ENCODE measurements at regions of chr10 and their contacts with region 1.

Region 1: DNA sequence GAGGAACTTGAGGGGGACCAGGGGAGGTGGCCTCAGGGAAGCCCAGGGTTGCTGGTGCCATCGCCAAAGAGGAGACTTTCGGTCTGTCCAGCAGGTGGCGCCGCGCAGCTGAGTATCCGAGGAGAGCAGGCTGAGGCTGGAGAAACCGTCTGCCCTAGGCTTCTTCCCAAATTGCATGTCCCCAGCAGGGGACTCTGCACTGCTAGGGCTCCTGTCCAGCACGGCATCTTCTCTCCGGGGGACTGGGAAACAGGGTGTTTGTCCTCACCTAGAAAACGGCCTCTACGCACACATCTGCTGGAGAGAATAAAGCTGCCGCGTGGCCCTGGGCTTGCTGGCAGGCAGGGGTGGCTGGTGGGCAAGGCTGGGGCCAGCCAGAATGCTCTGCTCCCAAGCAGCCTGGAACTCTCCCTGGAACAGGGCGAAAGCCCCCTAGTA is 161.9 kb downstream of the SH2D4B start:
- DNase-seq: peak; percentile 85
- ATAC-seq: peak; percentile 86
- H3K4me3 Mint-ChIP-seq: no peak overlapping the region
- H3K27ac Mint-ChIP-seq: no peak overlapping the region
- H3K4me1 Mint-ChIP-seq: no peaks in the 10 kb centered on the region
- H3K27me3 Mint-ChIP-seq: peaks cover 4% of the 10 kb centered on the region
- CTCF ChIP-seq: peak; percentile 85

Region 2: GRCh38 chr10:80684259-80684658 is 15.4 kb before region 1 on chr10:
- CTCF ChIA-PET with region 1: interaction called, 16 read pairs
- POLR2A ChIA-PET with region 1: interaction called, 4 read pairs
- intact Hi-C with region 1: no loop called
- DNase-seq: no peak
- ATAC-seq: peak; percentile 34
- H3K4me3 Mint-ChIP-seq: no peak overlapping the region
- H3K27ac Mint-ChIP-seq: no peak overlapping the region
- H3K4me1 Mint-ChIP-seq: no peaks in the 10 kb centered on the region
- H3K27me3 Mint-ChIP-seq: no peaks in the 10 kb centered on the region
- CTCF ChIP-seq: no peak

Region 3: GRCh38 chr10:80713398-80713928 is 13.8 kb after region 1 on chr10:
- CTCF ChIA-PET with region 1: interaction called, 20 read pairs
- POLR2A ChIA-PET with region 1: no interaction called
- intact Hi-C with region 1: no loop called
- DNase-seq: no peak
- ATAC-seq: no peak
- H3K4me3 Mint-ChIP-seq: no peak overlapping the region
- H3K27ac Mint-ChIP-seq: no peak overlapping the region
- H3K4me1 Mint-ChIP-seq: no peaks in the 10 kb centered on the region
- H3K27me3 Mint-ChIP-seq: peaks cover 2% of the 10 kb centered on the region
- CTCF ChIP-seq: no peak

Region 4: GRCh38 chr10:80753612-80754011 is 54.0 kb after region 1 on chr10:
- CTCF ChIA-PET with region 1: no interaction called
- POLR2A ChIA-PET with region 1: no interaction called
- intact Hi-C with region 1: no loop called
- DNase-seq: no peak
- ATAC-seq: no peak
- H3K4me3 Mint-ChIP-seq: no peak overlapping the region
- H3K27ac Mint-ChIP-seq: no peak overlapping the region
- H3K4me1 Mint-ChIP-seq: no peaks in the 10 kb centered on the region
- H3K27me3 Mint-ChIP-seq: peaks cover 13% of the 10 kb centered on the region
- CTCF ChIP-seq: no peak

Region 5: DNA sequence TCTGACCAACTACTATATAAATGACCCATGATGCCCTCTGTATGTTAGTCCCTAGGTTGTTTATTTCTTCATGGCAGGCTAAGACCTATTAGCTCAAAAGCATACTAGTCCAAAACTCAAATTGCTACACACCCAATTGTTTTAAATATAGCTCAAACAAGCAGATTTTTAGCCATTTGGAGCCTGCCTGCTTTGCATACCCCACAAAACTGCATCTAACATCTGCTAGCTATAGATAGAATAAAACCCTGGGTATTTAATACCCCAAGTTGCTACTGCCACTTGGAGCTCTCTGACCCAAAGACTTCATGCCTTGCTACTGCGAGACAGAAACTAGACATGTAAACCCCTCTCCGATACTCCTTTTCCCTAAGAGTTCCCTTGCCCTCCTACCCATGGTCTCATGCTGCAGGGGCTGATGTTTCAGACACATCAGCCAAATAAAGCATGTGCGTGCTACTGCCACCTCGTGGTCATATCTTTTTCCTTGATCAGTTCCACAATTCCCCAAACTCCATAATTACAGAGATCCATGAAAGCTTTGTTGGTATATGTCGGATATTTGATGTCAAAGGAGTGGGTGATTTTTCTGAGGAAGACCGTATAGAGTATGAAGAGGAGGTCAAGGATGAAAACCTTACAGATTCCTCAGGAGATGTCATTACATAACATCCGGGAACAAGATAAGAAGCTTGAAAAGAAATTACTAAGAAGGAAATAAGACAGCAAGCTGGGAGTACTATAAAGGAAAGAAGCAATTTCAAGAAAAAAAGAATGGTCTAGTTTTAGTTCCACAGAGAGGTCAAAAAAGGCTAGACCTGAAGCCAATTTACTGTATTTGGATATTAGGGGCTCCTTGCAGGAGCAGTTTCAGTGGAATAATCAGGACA is 224.7 kb after region 1 on chr10:
- CTCF ChIA-PET with region 1: interaction called, 17 read pairs
- POLR2A ChIA-PET with region 1: no interaction called
- intact Hi-C with region 1: loop called (anchors 2 kb)
- DNase-seq: peak; percentile 35
- ATAC-seq: no peak
- H3K4me3 Mint-ChIP-seq: no peak overlapping the region
- H3K27ac Mint-ChIP-seq: no peak overlapping the region
- H3K4me1 Mint-ChIP-seq: no peaks in the 10 kb centered on the region
- H3K27me3 Mint-ChIP-seq: peaks cover 2% of the 10 kb centered on the region
- CTCF ChIP-seq: peak; percentile 48

Region 6: GRCh38 chr10:81018708-81019365 is 319.2 kb after region 1 on chr10:
- CTCF ChIA-PET with region 1: interaction called, 9 read pairs
- POLR2A ChIA-PET with region 1: no interaction called
- intact Hi-C with region 1: loop called (anchors 5 kb)
- DNase-seq: peak; percentile 19
- ATAC-seq: peak; percentile 56
- H3K4me3 Mint-ChIP-seq: no peak overlapping the region
- H3K27ac Mint-ChIP-seq: no peak overlapping the region
- H3K4me1 Mint-ChIP-seq: peaks cover 2% of the 10 kb centered on the region
- H3K27me3 Mint-ChIP-seq: peaks cover 7% of the 10 kb centered on the region
- CTCF ChIP-seq: peak; percentile 67